SK-N-SH (cell line): ENCODE measurements at regions of chr6 and their contacts with region 1.

Region 1: DNA sequence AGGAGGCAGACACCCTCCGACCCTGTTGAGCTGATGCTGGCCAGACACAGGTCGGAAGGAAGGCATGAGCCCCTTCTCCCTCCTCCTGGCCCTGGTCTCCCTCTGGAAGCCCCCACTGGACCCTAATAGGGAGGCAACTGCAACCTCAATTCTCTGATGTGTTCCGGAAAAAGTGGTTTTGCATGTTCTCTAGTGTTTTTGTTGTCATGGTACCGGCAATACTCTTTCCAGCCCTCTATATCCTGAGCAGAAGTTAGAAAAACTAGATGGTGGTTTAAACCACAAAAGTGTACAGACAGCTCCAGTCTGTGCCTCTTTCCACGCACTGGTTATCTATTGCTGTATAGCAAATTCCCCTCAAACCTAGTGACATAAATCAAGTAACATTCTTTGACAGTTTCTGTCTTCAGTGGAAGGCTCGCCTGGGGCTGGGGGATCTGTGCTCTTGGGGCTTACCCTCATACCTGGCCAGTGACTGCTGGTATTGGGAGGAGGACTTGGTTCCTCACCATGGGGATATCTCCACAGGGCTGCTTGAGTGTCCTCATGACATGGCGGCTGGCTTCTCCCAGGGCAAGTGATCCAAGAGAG is 37.0 kb downstream of the SYTL3 start:
- DNase-seq: no peak
- H3K4me3 ChIP-seq: no peak overlapping the region
- H3K27ac ChIP-seq: no peak overlapping the region
- H3K4me1 ChIP-seq: no peaks in the 10 kb centered on the region
- H3K27me3 ChIP-seq: no peaks in the 10 kb centered on the region
- CTCF ChIP-seq: no peak
- EP300 ChIP-seq: no peak
- RAD21 ChIP-seq: no peak

Region 2: GRCh38 chr6:158213925-158214674 is 472.8 kb before region 1 on chr6:
- CTCF ChIA-PET with region 1: interaction called, 50 read pairs
- POLR2A ChIA-PET with region 1: no interaction called
- DNase-seq: peak; percentile 80
- H3K4me3 ChIP-seq: no peak overlapping the region; a peak in 1 of 4 replicates
- H3K27ac ChIP-seq: 0 out of 4 replicates have a peak overlapping the region, but pooled peaks of 1 of the 2 experiments have one; percentile 2
- H3K4me1 ChIP-seq: 0 out of 4 replicates have a peak, but pooled peaks cover 0 to 5% of the 10 kb centered on the region in 2 experiments
- H3K27me3 ChIP-seq: no peaks in the 10 kb centered on the region
- CTCF ChIP-seq: peak; percentile 80
- EP300 ChIP-seq: no peak
- RAD21 ChIP-seq: peak; percentile 91

Region 3: DNA sequence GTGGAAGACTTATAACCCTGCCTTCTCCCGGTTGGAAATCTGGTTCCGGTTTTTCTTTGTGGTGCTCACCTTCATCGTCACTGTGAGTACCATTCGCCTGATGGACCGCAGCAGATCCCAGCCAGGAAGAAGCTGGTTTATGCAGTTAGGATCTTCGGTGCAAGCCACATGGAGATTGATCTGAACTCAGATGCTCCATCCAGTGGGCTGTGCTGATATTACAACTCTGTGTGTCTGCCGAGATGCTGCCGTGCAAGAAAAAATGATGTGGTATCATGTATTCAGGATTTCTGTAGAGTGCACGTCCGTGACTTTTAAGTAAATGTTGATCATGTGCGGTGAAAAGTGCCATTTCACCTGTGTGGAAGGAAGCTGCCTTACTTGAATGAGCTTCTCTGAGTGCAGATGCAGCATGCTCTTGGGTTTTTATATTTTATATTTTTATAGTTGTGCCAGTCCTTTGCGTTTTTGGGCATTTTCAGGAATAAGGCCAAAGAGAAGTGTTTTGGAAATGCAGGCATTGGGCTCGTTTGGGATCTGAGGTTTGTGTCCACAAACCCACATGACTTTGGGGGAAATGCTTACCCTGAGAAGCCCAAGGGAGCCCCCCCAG is 81.5 kb before region 1 on chr6:
- CTCF ChIA-PET with region 1: interaction called, 11 read pairs
- POLR2A ChIA-PET with region 1: no interaction called
- DNase-seq: peak; percentile 85
- H3K4me3 ChIP-seq: no peak overlapping the region
- H3K27ac ChIP-seq: no peak overlapping the region
- H3K4me1 ChIP-seq: peaks cover 0 to 15% of the 10 kb centered on the region in 2 experiments; a peak in 2 of 4 replicates
- H3K27me3 ChIP-seq: no peaks in the 10 kb centered on the region
- CTCF ChIP-seq: peak; percentile 74
- EP300 ChIP-seq: no peak
- RAD21 ChIP-seq: peak; percentile 79

Region 4: DNA sequence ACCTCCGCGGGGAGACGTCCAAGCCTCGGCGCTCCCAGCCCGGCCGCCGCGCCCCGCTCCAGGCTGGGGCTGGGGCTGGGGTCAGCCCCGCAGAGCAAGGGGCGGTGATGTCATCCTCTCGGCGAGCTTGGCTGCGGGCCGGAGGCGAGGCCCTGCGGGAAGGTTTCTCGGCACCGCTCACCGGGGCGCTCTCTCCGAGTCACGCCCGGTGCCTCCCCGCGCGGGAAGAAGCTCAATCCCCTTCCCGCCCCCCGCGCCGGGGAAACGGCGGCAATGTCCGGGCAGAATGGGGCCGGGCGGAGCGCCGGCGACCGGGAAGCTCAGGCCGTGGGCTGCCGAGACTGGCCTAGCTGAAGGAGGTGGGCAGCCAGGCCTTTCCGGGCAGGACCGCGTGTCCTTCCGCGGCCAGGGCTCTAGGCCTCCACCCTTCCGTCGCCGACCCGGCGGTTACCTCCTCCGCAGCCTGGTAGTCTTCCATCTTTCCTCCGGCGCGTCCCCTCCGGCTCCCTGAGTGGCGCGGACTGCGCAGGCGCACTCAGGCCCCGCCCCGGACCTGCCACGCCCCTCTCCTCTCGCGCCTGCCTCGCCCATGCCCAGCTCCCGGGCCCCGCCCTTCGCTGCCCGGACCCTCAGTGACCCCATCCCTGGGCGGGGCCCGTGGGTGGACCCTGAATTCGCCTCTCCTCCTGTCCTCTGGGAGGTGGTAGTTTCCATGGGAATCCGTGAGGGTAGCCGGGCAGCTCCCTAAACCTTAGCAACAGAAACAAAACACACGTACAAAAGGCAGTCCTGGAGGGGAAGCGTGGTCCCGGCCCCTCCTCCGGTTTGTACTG is 42.4 kb before region 1 on chr6 and contains the start of gene DYNLT1:
- CTCF ChIA-PET with region 1: interaction called, 46 read pairs
- POLR2A ChIA-PET with region 1: interaction called, 6 read pairs
- DNase-seq: peak; percentile 98
- H3K4me3 ChIP-seq: peak within 1 kb of the TSS; percentile 76 to 96
- H3K27ac ChIP-seq: peak within 1 kb of the TSS; percentile 94 to 95
- H3K4me1 ChIP-seq: peaks cover 20 to 30% of the 10 kb centered on the region in 2 experiments
- H3K27me3 ChIP-seq: no peaks in the 10 kb centered on the region
- CTCF ChIP-seq: no peak
- EP300 ChIP-seq: no peak
- RAD21 ChIP-seq: peak; percentile 33
- polyA plus RNA-seq, gene DYNLT1: 306 and 390 TPM in 2 replicates

Region 5: GRCh38 chr6:158697811-158698210 is 10.9 kb after region 1 on chr6:
- CTCF ChIA-PET with region 1: interaction called, 21 read pairs
- POLR2A ChIA-PET with region 1: no interaction called
- DNase-seq: no peak
- H3K4me3 ChIP-seq: no peak overlapping the region
- H3K27ac ChIP-seq: no peak overlapping the region
- H3K4me1 ChIP-seq: no peaks in the 10 kb centered on the region
- H3K27me3 ChIP-seq: no peaks in the 10 kb centered on the region
- CTCF ChIP-seq: no peak
- EP300 ChIP-seq: no peak
- RAD21 ChIP-seq: no peak

Region 6: GRCh38 chr6:158894193-158894592 is 207.3 kb after region 1 on chr6:
- CTCF ChIA-PET with region 1: no interaction called
- POLR2A ChIA-PET with region 1: no interaction called
- DNase-seq: no peak
- H3K4me3 ChIP-seq: no peak overlapping the region
- H3K27ac ChIP-seq: peak overlapping the region in 1 of 2 experiments; percentile 32; a peak in 1 of 4 replicates
- H3K4me1 ChIP-seq: no peaks in the 10 kb centered on the region
- H3K27me3 ChIP-seq: no peaks in the 10 kb centered on the region
- CTCF ChIP-seq: no peak
- EP300 ChIP-seq: no peak
- RAD21 ChIP-seq: no peak

Region 7: GRCh38 chr6:158972241-158973233 is 285.7 kb after region 1 on chr6:
- CTCF ChIA-PET with region 1: interaction called, 16 read pairs
- POLR2A ChIA-PET with region 1: no interaction called
- DNase-seq: peak; percentile 47
- H3K4me3 ChIP-seq: no peak overlapping the region
- H3K27ac ChIP-seq: no peak overlapping the region
- H3K4me1 ChIP-seq: no peaks in the 10 kb centered on the region
- H3K27me3 ChIP-seq: no peaks in the 10 kb centered on the region
- CTCF ChIP-seq: peak; percentile 69
- EP300 ChIP-seq: no peak
- RAD21 ChIP-seq: peak; percentile 88